B cell (primary cell): ENCODE measurements at regions of chr10 and their contacts with region 1.

Region 1: DNA sequence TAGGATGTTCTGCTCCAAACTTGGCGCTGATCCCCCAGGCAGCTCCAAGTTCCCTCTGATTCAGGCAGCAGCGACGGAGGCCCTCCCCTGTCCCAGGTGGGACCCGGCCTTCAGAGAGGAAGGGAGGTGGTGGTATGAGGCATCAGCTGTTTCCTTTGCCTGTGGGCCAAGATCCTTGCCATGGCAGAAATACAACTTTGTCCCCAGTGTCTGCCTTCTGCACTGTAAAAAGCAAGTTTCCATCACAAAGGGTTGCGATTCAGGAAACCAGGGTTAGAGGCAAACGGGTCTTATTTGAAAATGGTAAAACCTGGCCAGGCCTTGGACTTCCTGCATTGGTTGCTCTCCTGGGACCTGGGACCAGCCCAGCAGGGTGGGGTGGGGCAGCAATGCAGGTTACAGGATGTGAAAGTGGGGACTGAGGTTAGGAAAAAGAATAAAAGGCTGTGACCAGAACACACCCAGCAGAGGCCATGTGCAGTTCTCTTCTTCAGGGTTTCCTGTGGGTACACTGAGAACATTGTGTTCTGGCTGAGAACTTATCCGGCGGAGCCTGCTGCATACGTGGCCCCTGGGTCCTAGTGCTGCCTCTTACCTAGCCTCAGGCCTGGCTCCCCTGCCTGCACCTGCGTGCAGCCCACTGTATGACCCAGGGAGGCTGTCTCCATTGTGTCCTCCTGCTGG is 25.1 kb upstream of the DDIT4 start:
- DNase-seq: peak; percentile 85
- ATAC-seq: peak; percentile 76
- H3K4me3 ChIP-seq: peak overlapping the region in 4 of 5 experiments; percentile 26 to 49 (median 44)
- H3K4me3 Mint-ChIP-seq: peak overlapping the region; percentile 91
- H3K27ac ChIP-seq: peak overlapping the region; percentile 76 to 81
- H3K27ac Mint-ChIP-seq: peak overlapping the region; percentile 98
- H3K4me1 ChIP-seq: peaks cover 78 to 83% of the 10 kb centered on the region in 2 donors
- H3K4me1 Mint-ChIP-seq: peaks cover 80% of the 10 kb centered on the region
- H3K27me3 ChIP-seq: no peaks in the 10 kb centered on the region
- H3K27me3 Mint-ChIP-seq: no peaks in the 10 kb centered on the region
- CTCF ChIP-seq: no peak

Region 2: GRCh38 chr10:72267819-72268399 is 19.3 kb after region 1 on chr10:
- CTCF ChIA-PET with region 1: no interaction called
- POLR2A ChIA-PET with region 1: interaction called, 13 read pairs
- intact Hi-C with region 1: loop called (anchors 1 kb)
- DNase-seq: no peak
- ATAC-seq: no peak
- H3K4me3 ChIP-seq: no peak overlapping the region
- H3K4me3 Mint-ChIP-seq: no peak overlapping the region
- H3K27ac ChIP-seq: no peak overlapping the region
- H3K27ac Mint-ChIP-seq: no peak overlapping the region
- H3K4me1 ChIP-seq: peaks cover 10 to 18% of the 10 kb centered on the region in 2 donors
- H3K4me1 Mint-ChIP-seq: peaks cover 23% of the 10 kb centered on the region
- H3K27me3 ChIP-seq: no peaks in the 10 kb centered on the region
- H3K27me3 Mint-ChIP-seq: no peaks in the 10 kb centered on the region
- CTCF ChIP-seq: no peak